ENCODE measurements at regions of chr2 and their contacts with region 1.

Region 1: DNA sequence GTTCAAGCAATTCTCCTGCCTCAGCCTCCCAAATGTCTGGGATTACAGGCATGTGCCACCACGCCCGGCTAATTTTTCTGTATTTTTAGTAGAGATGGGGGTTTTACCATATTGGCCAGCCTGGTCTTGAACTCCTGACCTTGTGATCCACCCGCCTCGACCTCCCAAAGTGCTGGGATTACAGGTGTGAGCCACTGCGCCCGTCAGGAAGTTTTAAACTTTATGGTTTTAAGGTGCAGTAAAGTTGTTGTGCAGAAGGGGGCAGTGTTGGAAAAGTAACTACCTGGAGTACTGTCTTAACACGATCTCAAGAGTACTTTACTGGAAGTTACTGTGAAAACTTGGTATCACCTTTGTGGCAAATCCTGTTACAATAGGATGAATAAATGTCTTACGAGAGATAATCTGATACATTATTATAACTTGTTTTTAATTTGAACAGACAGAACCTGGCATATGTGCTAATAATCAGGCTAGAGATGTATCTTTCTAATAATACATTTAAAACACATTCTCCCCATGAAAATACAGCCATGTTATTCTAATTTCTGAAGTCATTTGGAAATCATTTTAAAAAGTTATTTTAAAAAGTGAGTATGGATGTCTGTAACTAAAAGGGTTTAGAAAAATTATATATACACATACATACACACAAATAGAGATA is 10.8 kb downstream of the SPDYA start:
- DNase-seq: peak; percentile 77 to 84 (median 80)
- H3K4me3 ChIP-seq: no peak overlapping the region
- H3K27ac ChIP-seq: no peak overlapping the region
- H3K4me1 ChIP-seq: no peaks in the 10 kb centered on the region
- H3K27me3 ChIP-seq: no peaks in the 10 kb centered on the region

Region 2: GRCh38 chr2:28716265-28716867 is 105.1 kb before region 1 on chr2:
- CTCF ChIA-PET with region 1: no interaction called
- POLR2A ChIA-PET with region 1: no interaction called
- DNase-seq: peak; percentile 34 to 80 (median 75)
- H3K4me3 ChIP-seq: peak overlapping the region in 1 of 7 experiments; percentile 19
- H3K27ac ChIP-seq: no peak overlapping the region
- H3K4me1 ChIP-seq: peaks cover 0 to 20% (median 7%) of the 10 kb centered on the region in 4 experiments
- H3K27me3 ChIP-seq: no peaks in the 10 kb centered on the region

Region 3: GRCh38 chr2:28810384-28811285 is 10.8 kb before region 1 on chr2 and contains the start of gene SPDYA:
- CTCF ChIA-PET with region 1: interaction called, 13 read pairs
- POLR2A ChIA-PET with region 1: no interaction called
- DNase-seq: peak; percentile 73 to 90 (median 87)
- H3K4me3 ChIP-seq: peak within 1 kb of the TSS; percentile 33 to 82 (median 65)
- H3K27ac ChIP-seq: no peak within 1 kb of the TSS
- H3K4me1 ChIP-seq: peaks cover 5 to 13% (median 12%) of the 10 kb centered on the region in 4 experiments
- H3K27me3 ChIP-seq: peaks cover 0 to 2% (median 0%) of the 10 kb centered on the region in 5 experiments

Region 4: DNA sequence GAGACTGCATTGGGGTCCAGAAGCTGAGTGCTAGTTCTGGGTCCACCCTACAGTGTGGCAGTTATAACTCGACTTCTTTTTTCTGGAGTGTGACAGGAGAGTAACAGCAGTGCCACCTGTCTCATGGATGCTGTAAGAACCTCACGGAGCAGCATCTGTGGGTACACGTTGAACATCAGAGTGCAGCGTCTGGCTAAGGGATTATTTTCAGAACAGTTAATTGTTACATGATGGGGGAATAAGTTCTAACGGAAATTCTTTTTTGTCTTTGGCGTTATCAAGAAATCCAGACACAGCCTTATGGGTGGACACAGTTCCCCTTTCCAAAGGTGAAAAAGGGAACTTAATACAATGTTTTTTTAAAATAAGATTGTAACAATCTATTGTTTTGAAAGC is 131.4 kb after region 1 on chr2:
- CTCF ChIA-PET with region 1: interaction called, 10 read pairs
- POLR2A ChIA-PET with region 1: no interaction called
- DNase-seq: peak; percentile 92 to 98 (median 96)
- H3K4me3 ChIP-seq: peak overlapping the region in 4 of 7 experiments; percentile 28 to 49 (median 40)
- H3K27ac ChIP-seq: peak overlapping the region; percentile 77 to 87
- H3K4me1 ChIP-seq: peaks cover 21 to 57% (median 43%) of the 10 kb centered on the region in 4 experiments
- H3K27me3 ChIP-seq: no peaks in the 10 kb centered on the region

Region 5: GRCh38 chr2:28976584-28976983 is 155.2 kb after region 1 on chr2:
- CTCF ChIA-PET with region 1: no interaction called
- POLR2A ChIA-PET with region 1: no interaction called
- DNase-seq: no peak
- H3K4me3 ChIP-seq: no peak overlapping the region
- H3K27ac ChIP-seq: no peak overlapping the region
- H3K4me1 ChIP-seq: no peaks in the 10 kb centered on the region
- H3K27me3 ChIP-seq: no peaks in the 10 kb centered on the region